RWPE1 (cell line): ENCODE measurements at regions of chr12 and their contacts with region 1.

Region 1: DNA sequence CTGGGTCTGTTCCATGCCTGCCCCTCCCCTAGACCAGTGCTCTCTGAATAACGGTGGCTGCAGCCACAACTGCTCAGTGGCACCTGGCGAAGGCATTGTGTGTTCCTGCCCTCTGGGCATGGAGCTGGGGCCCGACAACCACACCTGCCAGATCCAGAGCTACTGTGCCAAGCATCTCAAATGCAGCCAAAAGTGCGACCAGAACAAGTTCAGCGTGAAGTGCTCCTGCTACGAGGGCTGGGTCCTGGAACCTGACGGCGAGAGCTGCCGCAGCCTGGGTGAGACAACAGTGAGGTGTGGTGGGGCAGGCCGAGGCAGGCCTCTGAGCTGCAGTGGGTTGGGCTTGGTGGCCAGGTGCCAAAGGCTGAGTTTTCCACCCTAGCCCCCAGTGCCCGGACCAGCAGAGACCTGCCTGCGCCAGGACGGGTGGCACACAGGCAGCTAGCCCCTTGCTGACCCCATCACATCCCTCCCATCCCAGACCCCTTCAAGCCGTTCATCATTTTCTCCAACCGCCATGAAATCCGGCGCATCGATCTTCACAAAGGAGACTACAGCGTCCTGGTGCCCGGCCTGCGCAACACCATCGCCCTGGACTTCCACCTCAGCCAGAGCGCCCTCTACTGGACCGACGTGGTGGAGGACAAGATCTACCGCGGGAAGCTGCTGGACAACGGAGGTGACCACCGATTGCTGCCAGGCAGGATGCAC is 28.2 kb upstream of the LRP1-AS start:
- DNase-seq: peak; percentile 95
- H3K27ac ChIP-seq: peak overlapping the region; percentile 97
- CTCF ChIP-seq: peak; percentile 94

Region 2: GRCh38 chr12:56377310-56377988 is 798.1 kb before region 1 on chr12:
- CTCF ChIA-PET with region 1: no interaction called
- POLR2A ChIA-PET with region 1: no interaction called
- DNase-seq: peak; percentile 19
- H3K27ac ChIP-seq: no peak overlapping the region
- CTCF ChIP-seq: no peak

Region 3: GRCh38 chr12:56991319-56992246 is 184.0 kb before region 1 on chr12:
- CTCF ChIA-PET with region 1: no interaction called
- POLR2A ChIA-PET with region 1: no interaction called
- DNase-seq: no peak
- H3K27ac ChIP-seq: no peak overlapping the region
- CTCF ChIP-seq: no peak

Region 4: GRCh38 chr12:57151741-57152630 is 23.6 kb before region 1 on chr12:
- CTCF ChIA-PET with region 1: interaction called, 14 read pairs
- POLR2A ChIA-PET with region 1: no interaction called
- DNase-seq: peak; percentile 88
- H3K27ac ChIP-seq: peak overlapping the region; percentile 98
- CTCF ChIP-seq: no peak

Region 5: GRCh38 chr12:57196956-57197355 is 21.4 kb after region 1 on chr12:
- CTCF ChIA-PET with region 1: no interaction called
- POLR2A ChIA-PET with region 1: no interaction called
- DNase-seq: no peak
- H3K27ac ChIP-seq: 0 out of 2 replicates have a peak overlapping the region, but pooled peaks have one; percentile 4
- CTCF ChIP-seq: no peak

Region 6: GRCh38 chr12:57229634-57230380 is 54.2 kb after region 1 on chr12 and contains the start of gene SHMT2:
- CTCF ChIA-PET with region 1: no interaction called
- POLR2A ChIA-PET with region 1: no interaction called
- DNase-seq: peak; percentile 99
- H3K27ac ChIP-seq: peak within 1 kb of the TSS; percentile 84
- CTCF ChIP-seq: no peak